Endothelial cell of umbilical vein (primary cell): ENCODE measurements at regions of chr3 and their contacts with region 1.

Region 1: GRCh38 chr3:150253622-150254021 is 154.5 kb upstream of the TSC22D2 start:
- DNase-seq: peak; percentile 57
- H3K4me3 ChIP-seq: no peak overlapping the region
- H3K27ac ChIP-seq: no peak overlapping the region
- H3K4me1 ChIP-seq: peaks cover 32% of the 10 kb centered on the region
- H3K27me3 ChIP-seq: no peaks in the 10 kb centered on the region
- CTCF ChIP-seq: no peak
- POLR2A ChIP-seq: no peak

Region 2: DNA sequence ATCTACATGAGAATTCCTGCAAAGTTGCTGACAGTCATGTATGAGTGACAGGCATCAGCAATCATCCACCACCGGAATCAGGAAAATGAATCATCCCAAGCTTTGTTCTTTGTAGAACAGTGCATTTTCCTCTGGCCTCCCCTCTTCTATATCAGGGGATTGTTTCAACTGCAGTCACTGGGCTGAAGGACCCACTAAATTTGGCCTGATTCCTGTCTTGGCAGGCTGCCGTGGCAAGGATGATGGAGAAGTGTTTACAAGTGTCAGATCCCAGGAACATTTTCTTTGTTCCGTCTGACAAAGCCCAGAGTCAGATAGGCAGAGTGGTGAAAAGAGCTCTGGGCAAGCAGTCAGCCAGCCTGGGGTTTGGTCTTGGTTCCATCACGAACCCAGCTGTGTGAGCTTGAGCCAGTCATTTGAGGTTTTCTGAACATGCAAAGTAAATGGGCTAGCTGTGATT is 20.6 kb before region 1 on chr3:
- CTCF ChIA-PET with region 1: interaction called, 6 read pairs
- POLR2A ChIA-PET with region 1: interaction called, 3 read pairs
- dilution Hi-C with region 1: no loop called
- intact Hi-C with region 1: loop called (anchors 1 kb)
- DNase-seq: peak; percentile 95
- H3K4me3 ChIP-seq: no peak overlapping the region
- H3K27ac ChIP-seq: peak overlapping the region; percentile 76
- H3K4me1 ChIP-seq: peaks cover 33% of the 10 kb centered on the region
- H3K27me3 ChIP-seq: no peaks in the 10 kb centered on the region
- CTCF ChIP-seq: no peak
- POLR2A ChIP-seq: peak; percentile 21

Region 3: DNA sequence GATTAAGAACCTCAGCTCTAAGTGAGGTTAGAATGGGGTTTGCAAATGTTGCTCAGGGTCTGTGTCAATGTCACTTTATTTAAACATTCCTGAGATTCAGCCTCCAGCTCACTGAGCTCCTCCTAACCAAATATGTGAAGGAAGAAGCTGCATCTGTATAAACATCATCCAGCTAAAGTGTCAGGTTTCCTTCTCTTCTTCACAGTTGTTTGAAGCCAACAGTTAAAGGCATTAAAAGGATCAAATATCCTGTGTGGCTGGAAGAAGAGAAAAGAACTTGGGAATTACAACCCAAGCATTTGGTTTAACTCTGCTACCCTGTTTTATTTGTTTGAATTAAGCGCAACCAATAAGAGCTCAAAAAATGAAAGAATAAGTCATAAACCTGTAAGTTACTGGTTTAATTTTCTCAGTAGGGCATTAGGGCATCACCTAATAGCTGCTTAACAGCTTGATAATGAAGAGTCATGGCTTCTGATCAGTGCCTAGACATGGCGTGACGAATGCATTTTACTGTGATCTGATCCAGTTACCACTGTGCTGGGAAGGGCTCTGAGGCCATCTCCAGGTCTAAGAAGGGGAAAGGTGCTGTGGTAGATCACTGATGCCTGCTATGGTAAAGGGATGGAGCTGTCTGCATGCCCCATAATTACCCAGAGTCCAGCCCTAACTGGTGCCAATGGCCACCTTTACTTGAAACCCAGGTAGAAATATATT is 11.2 kb before region 1 on chr3:
- CTCF ChIA-PET with region 1: interaction called, 10 read pairs
- POLR2A ChIA-PET with region 1: interaction called, 3 read pairs
- dilution Hi-C with region 1: no loop called
- intact Hi-C with region 1: no loop called
- DNase-seq: no peak
- H3K4me3 ChIP-seq: no peak overlapping the region
- H3K27ac ChIP-seq: no peak overlapping the region
- H3K4me1 ChIP-seq: peaks cover 9% of the 10 kb centered on the region
- H3K27me3 ChIP-seq: peaks cover 0 to 2% of the 10 kb centered on the region in 2 experiments
- CTCF ChIP-seq: no peak
- POLR2A ChIP-seq: no peak

Region 4: DNA sequence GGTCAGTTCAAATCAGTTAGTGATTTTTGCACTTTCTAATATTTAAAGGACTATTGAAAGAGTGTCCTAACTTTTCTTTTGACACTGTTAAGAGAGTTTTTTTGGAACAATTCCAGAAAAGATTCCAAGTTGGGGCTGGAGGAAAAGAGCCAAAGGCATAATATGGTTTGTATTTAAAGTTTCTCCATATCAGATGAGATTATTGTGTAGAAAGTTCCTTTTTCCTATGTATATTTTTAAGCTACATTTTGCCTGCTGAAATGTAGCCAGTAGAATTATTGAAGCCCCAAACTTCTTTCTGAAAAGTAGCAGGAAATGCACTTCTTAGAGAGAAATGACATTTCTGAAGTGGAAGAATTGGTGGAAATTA is 18.0 kb after region 1 on chr3:
- CTCF ChIA-PET with region 1: no interaction called
- POLR2A ChIA-PET with region 1: no interaction called
- dilution Hi-C with region 1: no loop called
- intact Hi-C with region 1: no loop called
- DNase-seq: peak; percentile 15
- H3K4me3 ChIP-seq: no peak overlapping the region
- H3K27ac ChIP-seq: no peak overlapping the region
- H3K4me1 ChIP-seq: no peaks in the 10 kb centered on the region
- H3K27me3 ChIP-seq: no peaks in the 10 kb centered on the region
- CTCF ChIP-seq: no peak
- POLR2A ChIP-seq: no peak

Region 5: GRCh38 chr3:150303776-150304175 is 50.2 kb after region 1 on chr3:
- CTCF ChIA-PET with region 1: no interaction called
- POLR2A ChIA-PET with region 1: no interaction called
- dilution Hi-C with region 1: no loop called
- intact Hi-C with region 1: loop called (anchors 2 kb)
- DNase-seq: no peak
- H3K4me3 ChIP-seq: no peak overlapping the region
- H3K27ac ChIP-seq: no peak overlapping the region
- H3K4me1 ChIP-seq: peaks cover 39% of the 10 kb centered on the region
- H3K27me3 ChIP-seq: no peaks in the 10 kb centered on the region
- CTCF ChIP-seq: peak; percentile 17 to 18
- POLR2A ChIP-seq: no peak